ENCODE measurements at regions of chr1 and their contacts with region 1.

Region 1: GRCh38 chr1:184075055-184076029 is 23.8 kb downstream of the TSEN15 start:
- DNase-seq: no peak
- ATAC-seq: peak; percentile 73

Region 2: GRCh38 chr1:184563308-184563707 is 488.0 kb after region 1 on chr1:
- intact Hi-C with region 1: loop called in 1 of 2 experiments (anchors 10 kb)
- DNase-seq: no peak
- ATAC-seq: peak; percentile 36

Region 3: DNA sequence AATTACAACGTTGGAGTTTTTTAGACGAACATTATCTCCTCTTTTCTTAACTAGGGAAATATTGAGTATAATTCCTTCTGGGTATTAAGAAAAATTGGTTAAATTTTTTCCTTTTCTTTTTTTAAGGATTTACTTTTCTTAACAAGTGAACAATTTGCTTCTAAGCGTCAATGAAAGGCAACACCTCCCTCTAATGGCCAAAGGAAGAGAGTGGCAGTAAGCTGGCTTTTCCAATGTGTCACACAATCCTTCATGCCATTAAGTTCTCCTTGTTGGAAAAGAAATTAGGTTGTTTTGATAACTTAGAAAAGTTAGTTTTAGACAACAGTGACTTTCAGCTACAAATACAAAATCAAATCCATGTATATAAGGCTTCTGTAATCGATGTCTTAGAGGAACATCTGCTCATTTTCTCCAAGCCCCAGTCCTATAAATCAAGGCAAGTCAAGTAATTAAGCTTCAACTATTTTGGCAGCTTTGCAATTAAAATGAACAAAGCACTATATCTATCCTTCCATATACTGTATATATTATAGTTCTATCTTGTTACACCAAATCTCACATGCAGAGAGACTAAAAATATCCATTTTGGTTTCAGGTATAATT is 616.5 kb after region 1 on chr1:
- intact Hi-C with region 1: loop called in 1 of 2 experiments (anchors 10 kb)
- DNase-seq: no peak
- ATAC-seq: peak; percentile 72

Measured in left colon (tissue), 2 donors.